ENCODE measurements at regions of chr21 and their contacts with region 1.

Region 1: DNA sequence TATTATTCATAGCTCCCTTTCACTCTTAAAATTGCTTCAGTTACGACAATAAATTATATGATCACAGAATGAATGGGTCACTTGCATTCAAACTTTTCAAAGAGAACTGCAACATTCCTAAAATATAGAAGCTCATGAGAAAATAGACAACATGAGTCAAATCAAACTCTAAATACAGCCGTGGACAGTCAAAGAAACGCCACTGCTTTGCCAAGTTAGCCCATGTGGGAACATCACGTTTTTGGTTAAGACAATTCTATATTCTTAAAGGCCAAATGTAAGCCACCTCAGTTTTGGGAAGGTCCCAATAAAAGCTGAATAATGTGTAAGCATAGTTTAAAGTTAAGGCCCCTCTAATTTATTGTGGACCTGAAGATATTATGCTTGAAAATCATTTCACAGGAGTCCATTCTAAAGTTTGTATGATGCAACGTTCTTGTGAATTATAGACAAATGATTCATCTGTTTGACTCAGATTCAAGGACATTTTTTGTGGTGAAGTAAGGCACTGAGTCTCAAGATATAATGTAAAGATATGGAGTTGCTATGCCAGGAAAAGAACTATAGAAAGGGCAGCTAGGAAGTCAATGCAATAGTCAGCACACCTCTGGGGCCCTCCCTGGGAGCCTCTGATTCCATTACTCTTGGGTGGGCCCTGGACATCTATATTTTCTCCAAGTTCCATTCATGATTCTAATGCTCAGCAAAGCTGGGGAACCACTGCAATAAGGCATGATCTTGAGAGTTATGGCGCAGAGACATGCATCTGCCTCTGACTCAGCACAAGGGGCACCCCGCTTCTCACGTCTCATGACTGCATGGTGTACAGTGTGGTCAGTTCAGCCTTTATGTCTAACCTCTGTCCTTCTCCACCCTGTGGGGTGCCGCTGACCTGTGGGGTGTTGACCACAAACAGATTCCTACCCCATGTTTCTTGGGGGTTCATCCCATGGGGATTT is 33.9 kb downstream of the ETS2 start:
- DNase-seq: no peak
- ATAC-seq: no peak
- H3K4me3 ChIP-seq: no peak overlapping the region
- H3K4me3 Mint-ChIP-seq: no peak overlapping the region
- H3K27ac ChIP-seq: no peak overlapping the region
- H3K27ac Mint-ChIP-seq: no peak overlapping the region
- H3K4me1 ChIP-seq: no peaks in the 10 kb centered on the region
- H3K4me1 Mint-ChIP-seq: no peaks in the 10 kb centered on the region
- H3K27me3 ChIP-seq: no peaks in the 10 kb centered on the region
- H3K27me3 Mint-ChIP-seq: peaks cover 7% of the 10 kb centered on the region
- CTCF ChIP-seq: no peak

Region 2: DNA sequence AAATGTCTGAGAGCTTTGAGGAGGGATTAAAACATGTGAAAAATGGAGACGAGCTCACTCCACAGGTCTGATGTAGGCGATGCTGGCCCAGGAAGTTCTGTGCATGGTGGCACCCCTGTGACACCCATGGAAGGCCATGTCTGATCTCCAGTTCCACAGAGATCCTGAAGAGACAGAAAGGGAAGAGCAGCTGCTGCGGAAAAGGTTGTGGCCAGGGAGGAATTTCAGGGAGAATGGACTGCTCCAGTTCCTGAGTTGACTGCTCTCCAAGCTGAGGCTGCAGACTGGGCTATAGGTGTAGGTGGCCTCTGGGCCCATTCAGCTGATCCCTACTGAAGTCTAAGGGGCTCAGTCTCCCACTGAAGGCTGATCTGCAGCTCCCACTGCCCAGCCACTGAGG is 55.3 kb after region 1 on chr21:
- CTCF ChIA-PET with region 1: no interaction called
- POLR2A ChIA-PET with region 1: no interaction called
- intact Hi-C with region 1: loop called in 1 of 2 experiments (anchors 5 kb)
- DNase-seq: no peak
- ATAC-seq: no peak
- H3K4me3 ChIP-seq: no peak overlapping the region
- H3K4me3 Mint-ChIP-seq: no peak overlapping the region
- H3K27ac ChIP-seq: no peak overlapping the region
- H3K27ac Mint-ChIP-seq: no peak overlapping the region
- H3K4me1 ChIP-seq: no peaks in the 10 kb centered on the region
- H3K4me1 Mint-ChIP-seq: no peaks in the 10 kb centered on the region
- H3K27me3 ChIP-seq: no peaks in the 10 kb centered on the region
- H3K27me3 Mint-ChIP-seq: peaks cover 20% of the 10 kb centered on the region
- CTCF ChIP-seq: no peak

Measured in CD8-positive, alpha-beta T cell (primary cell).